Heart left ventricle (tissue), 16 donors: ENCODE measurements at regions of chr4 and their contacts with region 1.

Region 1: GRCh38 chr4:158856852-158857251 is 88.0 kb downstream of the FNIP2 start:
- DNase-seq: no peak
- ATAC-seq: peak; percentile 18 to 68 (median 60)
- H3K4me3 ChIP-seq: no peak overlapping the region
- H3K27ac ChIP-seq: no peak overlapping the region
- H3K4me1 ChIP-seq: peaks cover 0 to 16% (median 0%) of the 10 kb centered on the region in 12 donors
- H3K27me3 ChIP-seq: no peaks in the 10 kb centered on the region
- CTCF ChIP-seq: peak; percentile 39 to 71 (median 59)
- POLR2A ChIP-seq: no peak

Region 2: DNA sequence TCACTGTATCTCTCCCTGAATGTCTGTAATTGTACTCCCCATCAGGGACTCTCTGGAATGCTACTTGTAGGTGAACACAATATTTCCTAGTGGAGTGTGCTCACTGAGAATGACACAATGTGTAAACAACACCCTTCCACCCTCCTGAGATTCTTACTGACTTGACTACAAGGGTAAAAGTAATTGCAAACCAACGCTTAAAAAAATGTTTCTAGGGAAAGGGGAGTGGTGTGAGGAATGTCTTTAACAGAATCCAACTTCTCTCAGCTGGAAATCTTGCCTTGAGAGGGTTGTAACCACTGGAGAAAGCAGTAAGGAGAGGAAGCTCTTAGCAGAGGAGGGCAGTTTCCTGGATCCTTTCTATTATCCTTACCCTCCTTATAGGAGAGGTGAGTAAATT is 240.9 kb after region 1 on chr4:
- intact Hi-C with region 1: loop called in 3 of 10 experiments (anchors 5 to 10 kb)
- DNase-seq: no peak
- ATAC-seq: peak in 1 of 4 donors; percentile 16
- H3K4me3 ChIP-seq: no peak overlapping the region
- H3K27ac ChIP-seq: peak overlapping the region in 7 of 12 donors; percentile 5 to 58 (median 44)
- H3K4me1 ChIP-seq: peaks cover 0 to 33% (median 13%) of the 10 kb centered on the region in 12 donors
- H3K27me3 ChIP-seq: no peaks in the 10 kb centered on the region
- CTCF ChIP-seq: no peak
- POLR2A ChIP-seq: no peak

Region 3: DNA sequence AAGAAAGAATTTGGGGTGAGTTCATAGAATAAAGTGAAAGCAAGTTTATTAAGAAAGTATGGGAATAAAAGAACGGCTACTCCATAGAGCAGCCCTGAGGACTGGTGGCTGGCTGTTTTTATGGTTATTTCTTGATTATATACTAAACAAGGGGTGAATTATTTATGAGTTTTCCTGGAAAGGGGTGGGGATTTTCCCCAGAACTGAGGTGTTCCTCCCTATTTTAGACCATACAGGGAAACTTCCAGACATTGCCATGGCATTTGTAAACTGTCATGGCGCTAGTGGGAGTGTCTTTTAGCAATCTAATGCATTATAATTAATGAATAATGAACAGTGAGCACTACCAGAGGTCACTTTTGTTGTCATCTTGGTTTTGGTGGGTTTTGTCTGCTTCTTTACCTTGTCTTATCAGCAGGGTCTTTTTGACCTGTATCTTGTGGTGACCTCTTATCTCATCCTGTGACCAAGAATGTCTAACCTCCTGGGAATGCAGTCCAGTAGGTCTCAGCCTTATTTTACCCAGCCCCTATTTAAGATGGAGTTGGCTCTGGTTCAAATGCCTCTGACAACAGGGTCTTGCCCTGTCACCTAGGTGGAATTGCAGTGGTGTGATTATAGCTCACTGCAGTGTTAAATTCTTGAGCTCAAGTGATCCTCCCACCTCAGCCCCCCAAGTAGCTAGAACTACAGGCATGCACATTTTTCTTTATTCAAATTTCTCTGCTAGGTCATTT is 273.1 kb after region 1 on chr4:
- intact Hi-C with region 1: no loop called
- DNase-seq: no peak
- ATAC-seq: no peak
- H3K4me3 ChIP-seq: no peak overlapping the region
- H3K27ac ChIP-seq: no peak overlapping the region
- H3K4me1 ChIP-seq: peaks cover 0 to 50% (median 30%) of the 10 kb centered on the region in 12 donors
- H3K27me3 ChIP-seq: no peaks in the 10 kb centered on the region
- CTCF ChIP-seq: no peak
- POLR2A ChIP-seq: no peak

Region 4: GRCh38 chr4:159201168-159201567 is 344.3 kb after region 1 on chr4:
- intact Hi-C with region 1: loop called (anchors 1 to 5 kb)
- DNase-seq: no peak
- ATAC-seq: peak; percentile 25 to 54 (median 42)
- H3K4me3 ChIP-seq: peak overlapping the region in 3 of 12 donors; percentile 1 to 3 (median 2)
- H3K27ac ChIP-seq: peak overlapping the region; percentile 35 to 79 (median 71)
- H3K4me1 ChIP-seq: peaks cover 6 to 80% (median 52%) of the 10 kb centered on the region in 12 donors
- H3K27me3 ChIP-seq: no peaks in the 10 kb centered on the region
- CTCF ChIP-seq: no peak
- POLR2A ChIP-seq: no peak